MCF 10A (cell line): ENCODE measurements at regions of chr10 and their contacts with region 1.

Region 1: DNA sequence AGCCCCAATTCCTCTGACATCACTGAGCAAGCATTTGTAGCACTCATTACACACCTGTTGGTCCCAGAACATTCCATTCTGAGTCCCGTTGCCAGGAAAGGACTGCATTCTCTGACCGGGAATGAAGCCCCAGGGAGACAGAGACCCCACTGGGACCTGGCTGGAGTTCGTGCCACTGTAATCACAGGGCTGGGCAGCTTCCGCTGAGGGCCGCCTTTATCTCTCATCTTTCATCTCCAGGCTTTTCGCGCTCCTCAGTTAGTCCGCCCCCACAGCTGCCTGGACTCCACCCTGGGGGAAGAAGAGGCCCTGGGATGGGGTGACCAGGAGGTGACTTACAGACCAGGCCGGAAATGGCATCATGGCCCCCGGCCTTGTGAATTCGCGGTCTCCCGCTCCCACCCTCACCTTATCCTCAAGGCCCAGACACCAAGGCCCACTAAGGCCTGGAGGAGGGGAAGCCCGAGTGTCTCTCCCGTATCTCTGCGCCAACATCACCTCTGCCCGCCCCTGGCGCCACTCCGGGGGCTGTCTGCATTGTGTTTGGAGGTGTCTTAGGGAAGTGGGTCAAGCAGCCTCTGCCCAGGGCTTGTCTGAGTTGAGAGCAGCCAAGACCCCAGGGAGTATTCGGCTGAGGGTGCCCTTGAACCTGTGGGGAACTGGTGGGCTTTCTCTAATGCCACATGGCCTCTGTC is 75.4 kb downstream of the PROSER2 start:
- DNase-seq: peak; percentile 89
- H3K4me3 Mint-ChIP-seq: peak overlapping the region; percentile 18
- H3K27ac Mint-ChIP-seq: peak overlapping the region; percentile 86
- H3K4me1 Mint-ChIP-seq: peaks cover 21% of the 10 kb centered on the region
- H3K27me3 Mint-ChIP-seq: no peaks in the 10 kb centered on the region
- CTCF ChIP-seq: no peak

Region 2: GRCh38 chr10:11863353-11864109 is 35.0 kb before region 1 on chr10:
- CTCF ChIA-PET with region 1: no interaction called
- POLR2A ChIA-PET with region 1: no interaction called
- intact Hi-C with region 1: no loop called
- DNase-seq: no peak
- H3K4me3 Mint-ChIP-seq: no peak overlapping the region
- H3K27ac Mint-ChIP-seq: no peak overlapping the region
- H3K4me1 Mint-ChIP-seq: no peaks in the 10 kb centered on the region
- H3K27me3 Mint-ChIP-seq: no peaks in the 10 kb centered on the region
- CTCF ChIP-seq: no peak

Region 3: DNA sequence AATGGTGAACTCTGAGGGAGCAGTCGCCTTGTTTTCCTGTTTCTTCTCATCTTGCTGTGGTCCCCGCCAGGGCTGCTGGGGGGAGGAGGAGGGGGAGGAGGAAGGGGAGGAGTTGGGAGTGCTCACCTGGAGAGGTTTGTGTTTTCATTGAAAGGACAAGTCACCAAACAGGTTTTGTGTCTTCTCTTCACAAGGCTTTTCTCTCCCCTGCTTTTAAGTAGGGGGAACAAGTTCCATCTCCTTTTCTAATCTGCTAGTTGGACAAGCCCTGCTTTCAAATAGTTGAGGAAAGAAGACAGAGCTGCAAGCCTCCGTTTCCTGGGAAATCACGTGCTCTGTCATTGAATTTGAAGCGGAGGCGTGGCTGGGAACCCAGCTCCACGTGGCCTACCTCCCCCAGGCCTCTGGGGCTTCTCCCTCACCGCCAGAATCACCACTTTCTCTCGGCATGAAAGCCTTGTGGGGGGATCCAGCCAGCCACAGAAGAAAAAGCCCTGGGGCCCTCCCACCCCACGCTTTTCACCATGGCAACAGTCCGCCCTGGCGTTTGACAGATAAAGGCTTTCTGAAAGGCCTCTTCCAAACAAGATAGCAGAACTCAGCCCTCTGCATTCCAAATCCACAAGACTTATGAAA is 23.9 kb before region 1 on chr10:
- CTCF ChIA-PET with region 1: no interaction called
- POLR2A ChIA-PET with region 1: interaction called, 12 read pairs
- intact Hi-C with region 1: no loop called
- DNase-seq: peak; percentile 77
- H3K4me3 Mint-ChIP-seq: no peak overlapping the region
- H3K27ac Mint-ChIP-seq: peak overlapping the region; percentile 96
- H3K4me1 Mint-ChIP-seq: peaks cover 21% of the 10 kb centered on the region
- H3K27me3 Mint-ChIP-seq: no peaks in the 10 kb centered on the region
- CTCF ChIP-seq: no peak

Region 4: DNA sequence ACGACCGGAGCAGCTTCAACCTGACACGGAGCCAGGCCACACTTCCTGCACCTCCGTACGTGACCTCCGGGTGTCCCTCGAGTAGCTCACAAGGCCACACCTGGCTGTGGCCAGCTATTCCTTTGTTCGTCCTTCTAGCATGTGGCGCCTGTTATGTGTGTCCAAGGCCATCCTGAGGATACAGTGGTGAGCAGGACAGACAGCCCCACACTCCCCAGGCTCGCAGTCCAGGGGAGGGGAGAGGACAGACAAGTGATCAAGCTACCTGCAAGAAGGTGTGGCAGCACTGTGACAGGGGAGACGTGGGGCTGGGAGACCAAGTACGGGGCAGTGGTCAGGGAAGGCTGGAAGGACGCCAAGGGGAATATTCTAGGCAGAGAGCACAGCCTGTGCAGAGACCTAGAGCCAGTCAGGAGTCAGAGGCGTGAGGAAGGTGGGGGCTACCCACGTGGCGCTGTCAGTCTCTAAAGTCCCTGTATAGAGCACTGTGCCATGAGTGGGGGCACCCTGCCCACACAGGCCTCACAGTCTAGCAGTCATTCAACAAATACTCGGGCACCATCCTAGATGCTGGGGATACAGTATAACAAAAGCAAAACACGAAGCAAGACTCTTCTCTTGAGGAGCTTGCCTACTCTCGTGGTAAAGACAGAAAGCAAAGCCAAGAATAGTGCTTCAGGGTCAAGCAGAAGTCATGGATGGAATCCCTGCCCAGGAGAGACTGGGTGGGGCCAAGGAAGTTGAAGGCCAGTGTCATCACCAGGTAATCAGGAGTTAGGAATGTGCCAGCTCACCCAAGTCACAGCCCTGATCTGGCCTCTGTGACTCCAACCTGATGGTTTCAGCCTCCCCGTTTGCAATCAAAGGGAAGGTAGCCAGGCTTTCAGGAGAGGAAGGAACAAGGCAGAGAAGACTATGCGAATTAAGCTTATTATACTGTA is 16.8 kb before region 1 on chr10:
- CTCF ChIA-PET with region 1: interaction called, 3 read pairs
- POLR2A ChIA-PET with region 1: interaction called, 15 read pairs
- intact Hi-C with region 1: no loop called
- DNase-seq: peak; percentile 80
- H3K4me3 Mint-ChIP-seq: no peak overlapping the region
- H3K27ac Mint-ChIP-seq: peak overlapping the region; percentile 87
- H3K4me1 Mint-ChIP-seq: peaks cover 30% of the 10 kb centered on the region
- H3K27me3 Mint-ChIP-seq: no peaks in the 10 kb centered on the region
- CTCF ChIP-seq: no peak

Region 5: DNA sequence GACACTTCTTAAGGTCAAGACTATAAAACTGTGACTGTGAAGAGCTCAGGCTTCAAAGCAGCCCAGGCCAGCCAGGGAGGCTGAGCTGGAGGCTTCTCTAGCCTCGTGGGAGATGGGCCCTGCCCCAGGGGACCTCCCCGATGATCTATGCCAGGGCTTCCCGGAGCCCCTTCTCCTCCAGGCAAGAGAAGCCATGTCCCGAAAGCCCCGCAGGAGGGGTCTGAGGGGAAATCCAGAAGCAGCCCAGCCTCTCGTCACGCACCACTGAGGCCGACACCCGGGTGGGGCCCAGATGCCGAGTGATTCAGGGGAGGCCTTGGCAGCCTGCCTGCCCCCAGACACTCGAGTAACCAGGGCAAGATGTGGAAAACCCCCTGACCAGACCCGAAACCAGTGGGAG is 11.7 kb before region 1 on chr10:
- CTCF ChIA-PET with region 1: interaction called, 3 read pairs
- POLR2A ChIA-PET with region 1: interaction called, 15 read pairs
- intact Hi-C with region 1: no loop called
- DNase-seq: no peak
- H3K4me3 Mint-ChIP-seq: no peak overlapping the region
- H3K27ac Mint-ChIP-seq: peak overlapping the region; percentile 70
- H3K4me1 Mint-ChIP-seq: peaks cover 15% of the 10 kb centered on the region
- H3K27me3 Mint-ChIP-seq: no peaks in the 10 kb centered on the region
- CTCF ChIP-seq: no peak